Activated CD4-positive, alpha-beta T cell treated with anti-CD3 and anti-CD28 coated beads for 36 hours (primary cell): ENCODE measurements at regions of chr1 and their contacts with region 1.

Region 1: DNA sequence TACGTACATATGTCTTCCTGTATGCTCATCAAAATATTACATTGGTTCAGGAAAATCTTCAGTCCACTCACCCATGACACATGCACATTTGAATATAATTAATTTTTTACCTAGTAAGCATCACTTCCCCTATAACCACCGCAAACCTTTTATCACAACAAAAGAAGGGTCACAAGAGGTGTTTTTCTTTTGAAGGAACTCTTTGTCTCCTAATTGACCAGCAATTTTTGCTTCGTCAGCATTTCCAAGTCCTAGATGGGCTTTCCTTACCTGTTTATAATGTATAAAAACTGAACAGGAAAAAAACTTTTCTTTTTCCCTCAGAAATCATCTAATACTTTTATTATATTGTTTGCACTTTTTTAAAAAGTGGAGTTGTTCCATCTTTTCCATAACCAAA is 631.3 kb downstream of the PLA2G4A start:
- DNase-seq: no peak
- ATAC-seq: no peak
- H3K4me3 Mint-ChIP-seq: no peak overlapping the region
- H3K27ac Mint-ChIP-seq: no peak overlapping the region
- H3K4me1 Mint-ChIP-seq: no peaks in the 10 kb centered on the region
- H3K27me3 Mint-ChIP-seq: no peaks in the 10 kb centered on the region

Region 2: GRCh38 chr1:187413405-187414182 is 46.5 kb before region 1 on chr1:
- CTCF ChIA-PET with region 1: no interaction called
- POLR2A ChIA-PET with region 1: no interaction called
- intact Hi-C with region 1: loop called in 1 of 2 experiments (anchors 5 kb)
- DNase-seq: no peak
- ATAC-seq: no peak
- H3K4me3 Mint-ChIP-seq: no peak overlapping the region
- H3K27ac Mint-ChIP-seq: no peak overlapping the region
- H3K4me1 Mint-ChIP-seq: peaks cover 2% of the 10 kb centered on the region
- H3K27me3 Mint-ChIP-seq: no peaks in the 10 kb centered on the region